OCI-LY7 (cell line): ENCODE measurements at regions of chr17 and their contacts with region 1.

Region 1: GRCh38 chr17:3965118-3965803 is 1.0 kb upstream of the ATP2A3 start:
- DNase-seq: peak; percentile 87
- H3K4me3 ChIP-seq: peak overlapping the region; percentile 87
- H3K27ac ChIP-seq: peak overlapping the region; percentile 94
- H3K4me1 ChIP-seq: peaks cover 51% of the 10 kb centered on the region
- CTCF ChIP-seq: no peak; the same call in 1 of the 2 replicates

Region 2: DNA sequence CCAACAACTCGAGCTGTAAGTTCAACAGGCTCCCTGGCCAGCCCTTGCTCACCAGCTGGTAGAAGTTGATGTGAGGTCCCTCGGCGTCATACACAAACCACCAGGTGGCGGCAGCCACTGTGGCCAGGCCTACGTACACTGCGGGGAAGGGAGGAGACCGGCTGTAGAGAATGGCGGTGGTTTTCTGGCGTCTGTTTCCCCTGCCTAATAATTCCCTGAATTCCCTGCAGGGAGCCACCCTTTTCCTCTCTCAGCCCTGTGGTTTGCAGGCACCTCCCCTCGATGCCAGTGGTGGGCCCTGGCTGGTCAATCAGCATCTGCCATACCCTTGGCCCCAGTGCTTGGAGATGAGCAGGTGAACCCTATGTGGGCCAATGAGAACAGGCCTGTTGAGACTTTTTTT is 30.1 kb before region 1 on chr17:
- CTCF ChIA-PET with region 1: no interaction called
- POLR2A ChIA-PET with region 1: no interaction called
- intact Hi-C with region 1: loop called (anchors 2 kb)
- DNase-seq: peak; percentile 71
- H3K4me3 ChIP-seq: no peak overlapping the region
- H3K27ac ChIP-seq: no peak overlapping the region
- H3K4me1 ChIP-seq: no peaks in the 10 kb centered on the region
- CTCF ChIP-seq: peak; percentile 73

Region 3: DNA sequence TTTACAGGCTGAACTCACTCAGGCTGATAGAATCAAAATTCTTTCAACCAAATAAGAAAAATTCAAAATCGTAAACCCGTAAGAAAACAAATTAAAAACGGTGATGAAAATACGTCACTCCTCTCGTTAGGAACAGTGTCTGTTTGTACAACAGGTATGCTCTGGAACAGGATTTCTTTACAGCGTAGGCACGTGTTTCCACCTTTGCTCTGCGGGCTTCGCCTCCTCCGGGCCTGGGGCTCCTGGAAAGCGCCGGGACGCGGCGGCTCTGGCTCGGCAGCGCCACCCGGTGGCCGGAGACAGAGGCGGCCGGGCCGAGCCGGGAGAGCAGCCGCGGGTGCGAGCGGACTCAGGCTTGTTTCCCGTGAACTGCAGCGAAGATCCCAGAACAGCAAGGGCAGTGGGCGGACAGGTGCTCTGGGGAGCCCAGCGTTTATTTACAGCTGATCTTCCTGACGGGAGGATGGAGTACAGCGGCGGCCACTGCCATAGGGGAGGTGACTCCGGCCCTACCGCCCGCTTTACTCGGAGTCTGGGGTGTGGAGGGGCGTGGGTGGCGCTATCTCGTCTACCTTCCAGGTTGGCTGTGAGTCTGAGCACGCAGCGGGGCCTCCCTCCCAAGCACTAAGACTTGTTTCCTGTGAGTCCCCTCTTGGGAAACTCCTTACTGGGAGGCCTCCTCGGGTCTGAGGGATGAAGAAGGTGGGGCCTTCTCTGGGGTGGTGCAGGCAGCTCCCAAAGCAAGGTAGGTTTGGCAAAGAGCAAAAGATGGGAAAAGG is 39.4 kb after region 1 on chr17:
- CTCF ChIA-PET with region 1: no interaction called
- POLR2A ChIA-PET with region 1: interaction called, 4 read pairs
- intact Hi-C with region 1: loop called (anchors 1 kb)
- DNase-seq: peak; percentile 72
- H3K4me3 ChIP-seq: no peak overlapping the region
- H3K27ac ChIP-seq: no peak overlapping the region
- H3K4me1 ChIP-seq: peaks cover 13% of the 10 kb centered on the region
- CTCF ChIP-seq: peak; percentile 96

Region 4: GRCh38 chr17:4394208-4395110 is 429.2 kb after region 1 on chr17:
- CTCF ChIA-PET with region 1: no interaction called
- POLR2A ChIA-PET with region 1: no interaction called
- intact Hi-C with region 1: loop called (anchors 5 kb)
- DNase-seq: no peak
- H3K4me3 ChIP-seq: peak overlapping the region; percentile 59
- H3K27ac ChIP-seq: peak overlapping the region; percentile 97
- H3K4me1 ChIP-seq: peaks cover 83% of the 10 kb centered on the region
- CTCF ChIP-seq: no peak